Sciatic nerve (tissue), 2 donors: ENCODE measurements at regions of chr11 and their contacts with region 1.

Region 1: DNA sequence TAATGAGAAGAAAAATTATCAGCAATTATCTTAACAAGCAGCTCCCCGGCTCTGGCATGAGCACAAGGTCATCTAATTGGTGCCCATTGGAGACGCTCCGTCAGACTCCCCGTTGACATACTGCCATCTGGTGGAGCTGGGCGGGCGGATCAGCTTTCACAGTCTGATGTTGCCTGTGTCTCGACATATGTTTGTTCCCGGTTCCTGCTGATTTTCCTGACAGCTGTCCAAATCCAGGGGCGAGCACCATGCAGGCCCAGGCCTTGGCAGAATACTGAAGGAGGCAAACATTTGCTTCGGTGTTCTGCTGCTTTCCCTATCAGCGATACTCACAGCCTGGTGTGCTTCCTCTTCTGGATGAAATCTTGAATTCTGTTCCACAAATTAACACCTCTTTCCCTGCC is 43.8 kb upstream of the BARX2 start:
- DNase-seq: peak; percentile 91
- ATAC-seq: peak; percentile 97

Region 2: DNA sequence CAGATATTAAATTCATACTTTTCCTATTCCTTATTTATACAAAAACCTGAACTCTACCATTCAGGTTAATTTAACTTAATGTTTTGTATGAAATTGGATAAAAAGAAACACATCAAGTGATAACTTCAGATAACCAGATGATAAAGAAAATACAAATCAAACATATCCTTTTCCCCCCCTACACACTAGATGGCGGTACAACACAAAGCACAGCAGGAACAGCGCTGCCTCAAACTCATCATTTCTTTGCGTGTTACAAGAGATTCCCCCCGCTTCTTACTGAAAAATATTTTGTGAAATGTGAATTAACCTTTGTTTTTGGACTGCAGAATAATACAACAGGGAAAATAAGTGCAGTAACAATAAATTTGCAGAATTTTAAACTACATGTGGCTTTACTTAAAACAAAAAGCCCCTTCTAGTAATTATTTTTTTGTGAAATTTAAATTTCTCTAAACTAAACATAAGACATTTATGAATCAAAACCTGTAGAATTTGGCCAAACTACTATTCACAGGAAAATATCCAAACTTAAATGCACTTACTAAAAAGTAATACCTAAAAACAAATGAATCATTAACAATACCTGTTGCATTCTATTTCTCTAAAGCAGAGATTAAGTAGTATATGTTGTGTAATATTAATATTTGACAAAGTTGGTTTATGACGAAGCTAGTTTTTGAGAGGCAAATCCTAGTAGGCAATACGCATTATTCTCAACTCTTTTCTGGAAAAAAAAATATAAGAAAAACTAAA is 214.1 kb before region 1 on chr11:
- intact Hi-C with region 1: loop called (anchors 5 kb)
- DNase-seq: no peak
- ATAC-seq: peak; percentile 79